HEK293T (cell line): ENCODE measurements at regions of chr13 and their contacts with region 1.

Region 1: DNA sequence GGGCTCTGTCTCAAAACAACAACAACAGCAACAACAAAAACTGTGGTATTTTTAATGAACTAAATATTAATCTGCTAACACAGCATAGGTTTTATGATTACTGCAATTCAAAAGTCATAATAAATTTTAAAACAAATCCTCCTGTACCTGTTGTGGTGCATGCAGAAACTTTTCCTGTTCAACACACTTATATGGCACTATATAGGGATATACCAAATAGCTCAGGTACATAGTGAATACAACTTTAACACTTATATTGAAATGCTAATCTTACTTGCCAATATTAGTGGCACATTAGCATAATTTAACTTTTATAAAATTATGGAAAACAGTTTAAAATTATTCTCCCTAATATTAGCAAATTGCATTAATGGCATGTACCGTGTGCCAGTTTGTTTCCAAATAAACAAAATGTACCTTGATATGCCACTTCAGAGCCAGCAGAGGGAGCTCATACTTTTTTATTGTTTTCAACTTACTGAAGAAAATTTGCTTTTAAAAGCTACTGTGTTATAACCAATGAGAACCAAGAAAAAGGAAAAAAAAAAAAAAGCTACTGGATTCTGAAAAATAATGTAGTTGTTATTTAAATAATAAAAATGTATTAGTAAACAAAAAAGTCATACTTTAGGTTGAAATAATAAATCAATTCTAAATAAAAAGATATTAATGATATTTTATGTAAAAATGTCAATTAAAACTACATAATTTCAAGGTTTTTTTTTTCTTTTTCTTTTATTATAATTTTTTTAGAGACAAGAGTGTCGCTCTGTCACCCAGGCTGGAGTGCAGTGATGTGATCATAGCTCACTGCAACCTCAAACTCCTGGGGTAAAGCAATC is 18.0 kb upstream of the RBM26 start:
- DNase-seq: peak; percentile 60

Region 2: GRCh38 chr13:79405829-79406596 is 18.0 kb before region 1 on chr13 and contains the start of gene RBM26:
- CTCF ChIA-PET with region 1: interaction called, 5 read pairs
- POLR2A ChIA-PET with region 1: interaction called, 14 read pairs
- DNase-seq: peak; percentile 99

Region 3: GRCh38 chr13:79528759-79529191 is 104.8 kb after region 1 on chr13:
- CTCF ChIA-PET with region 1: interaction called, 25 read pairs
- POLR2A ChIA-PET with region 1: interaction called, 3 read pairs
- DNase-seq: peak; percentile 73

Region 4: GRCh38 chr13:79533781-79534400 is 109.9 kb after region 1 on chr13:
- CTCF ChIA-PET with region 1: interaction called, 77 read pairs
- POLR2A ChIA-PET with region 1: interaction called, 3 read pairs
- DNase-seq: no peak

Region 5: GRCh38 chr13:79541426-79542049 is 117.5 kb after region 1 on chr13:
- CTCF ChIA-PET with region 1: interaction called, 77 read pairs
- POLR2A ChIA-PET with region 1: interaction called, 11 read pairs
- DNase-seq: peak; percentile 40